WTC11 (cell line): ENCODE measurements at regions of chr1 and their contacts with region 1.

Region 1: DNA sequence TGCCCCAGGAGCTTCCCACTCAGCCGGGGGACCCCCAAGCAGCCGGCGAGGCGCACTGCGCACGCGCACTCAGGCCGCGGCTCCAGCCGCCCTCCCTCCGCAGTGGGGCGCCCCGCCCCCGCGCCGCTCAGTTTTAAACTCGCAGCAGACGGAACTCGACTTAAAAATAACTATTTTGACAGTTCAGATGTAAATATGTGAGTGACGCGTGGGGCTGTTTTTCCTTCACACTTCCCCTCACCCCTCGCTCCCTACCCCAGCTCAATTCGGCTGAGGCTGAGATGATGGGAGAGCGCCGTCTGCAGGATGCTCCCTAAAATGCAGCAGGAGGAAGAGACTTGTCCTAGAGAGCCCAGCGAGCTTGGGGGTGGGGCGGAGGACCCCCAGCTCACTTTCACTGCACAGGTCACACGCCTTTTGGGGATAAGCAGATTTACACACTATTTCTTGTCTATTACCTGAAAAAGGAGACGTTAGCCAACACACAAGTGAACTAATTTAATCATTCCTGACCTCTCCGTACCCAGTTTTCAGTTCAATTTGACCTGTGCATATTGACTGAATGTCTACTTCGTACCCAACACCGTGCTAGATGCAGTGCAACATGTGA is 8.9 kb upstream of the LEMD1 start:
- DNase-seq: peak; percentile 81
- ATAC-seq: peak; percentile 83
- H3K4me3 Mint-ChIP-seq: peak overlapping the region; percentile 83
- H3K27ac Mint-ChIP-seq: no peak overlapping the region
- H3K4me1 Mint-ChIP-seq: peaks cover 31% of the 10 kb centered on the region
- H3K27me3 Mint-ChIP-seq: peaks cover 82% of the 10 kb centered on the region
- CTCF ChIP-seq: peak; percentile 81

Region 2: DNA sequence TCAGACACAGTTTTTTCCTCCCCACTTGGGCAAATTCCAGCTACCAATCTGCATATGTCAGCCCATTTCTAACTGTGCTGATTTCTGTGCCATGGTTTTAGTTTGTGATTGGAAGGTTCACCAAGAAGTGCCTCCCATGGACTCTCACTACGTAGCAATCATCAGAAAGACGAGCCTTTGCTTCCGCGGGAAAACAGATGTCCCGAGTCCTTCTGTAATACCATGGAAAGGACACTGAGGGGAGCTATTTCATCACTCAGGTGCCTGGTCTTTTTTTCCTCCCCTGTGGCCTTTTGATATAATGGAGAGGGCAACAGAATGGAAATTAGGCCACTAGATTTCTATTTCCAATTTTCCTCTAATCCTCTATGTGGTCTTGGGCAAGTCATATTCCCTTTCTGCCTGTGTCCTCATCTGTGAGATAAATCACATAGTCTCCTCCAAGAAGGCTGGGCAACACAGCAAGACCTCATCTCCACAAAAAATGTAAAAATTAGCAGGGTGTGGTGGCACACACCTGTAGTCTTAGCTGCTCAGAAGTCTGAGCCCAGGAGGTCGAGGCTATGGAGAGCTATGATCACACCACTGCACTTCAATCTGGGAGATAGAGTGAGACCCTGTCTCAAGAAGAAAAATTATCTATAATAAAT is 33.7 kb before region 1 on chr1:
- CTCF ChIA-PET with region 1: interaction called, 38 read pairs
- POLR2A ChIA-PET with region 1: no interaction called
- DNase-seq: peak; percentile 41
- ATAC-seq: peak; percentile 93
- H3K4me3 Mint-ChIP-seq: no peak overlapping the region
- H3K27ac Mint-ChIP-seq: no peak overlapping the region
- H3K4me1 Mint-ChIP-seq: peaks cover 6% of the 10 kb centered on the region
- H3K27me3 Mint-ChIP-seq: peaks cover 13% of the 10 kb centered on the region
- CTCF ChIP-seq: peak; percentile 71

Region 3: DNA sequence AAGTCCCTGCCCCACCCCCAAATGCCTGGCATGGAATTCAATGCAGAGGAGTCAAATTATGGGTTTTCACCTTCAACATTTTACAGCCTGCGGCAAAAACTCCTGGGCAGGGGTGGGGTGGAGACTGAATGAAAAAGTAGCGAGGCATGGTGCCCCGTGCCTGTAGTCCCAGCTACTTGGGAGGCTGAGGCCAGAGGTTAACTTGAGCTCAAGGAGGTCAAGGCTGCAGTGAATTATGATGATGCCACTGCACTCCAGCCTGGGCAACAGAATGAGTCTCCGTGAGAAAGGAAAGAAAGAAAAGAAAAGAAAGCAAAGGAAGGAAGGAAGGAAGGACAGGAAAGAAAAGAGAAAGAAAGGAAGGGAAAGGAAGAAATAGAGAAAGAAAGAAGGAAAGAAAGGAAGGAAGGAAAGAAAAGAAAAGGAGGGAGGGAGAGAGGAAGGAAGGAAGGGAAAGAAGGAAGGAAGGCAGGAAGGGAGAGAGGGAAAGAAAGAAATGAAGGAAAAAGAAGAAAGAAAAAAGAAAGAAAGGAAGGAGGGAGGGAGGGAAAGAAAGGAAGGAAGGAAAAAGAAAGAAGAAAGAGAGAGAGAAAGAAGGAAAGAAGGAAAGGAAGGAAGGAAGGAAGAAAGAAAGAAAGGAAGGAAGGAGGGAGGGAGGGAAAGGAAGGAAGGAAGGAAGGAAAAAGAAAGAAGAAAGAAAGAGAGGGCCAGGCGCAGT is 20.1 kb before region 1 on chr1:
- CTCF ChIA-PET with region 1: interaction called, 69 read pairs
- POLR2A ChIA-PET with region 1: no interaction called
- DNase-seq: no peak
- ATAC-seq: no peak
- H3K4me3 Mint-ChIP-seq: no peak overlapping the region
- H3K27ac Mint-ChIP-seq: no peak overlapping the region
- H3K4me1 Mint-ChIP-seq: 0 out of 2 replicates have a peak, but pooled peaks cover 5% of the 10 kb centered on the region
- H3K27me3 Mint-ChIP-seq: peaks cover 34% of the 10 kb centered on the region
- CTCF ChIP-seq: no peak

Region 4: GRCh38 chr1:205449750-205450443 is 19.1 kb after region 1 on chr1:
- CTCF ChIA-PET with region 1: interaction called, 121 read pairs
- POLR2A ChIA-PET with region 1: interaction called, 9 read pairs
- DNase-seq: peak; percentile 74
- ATAC-seq: peak; percentile 13
- H3K4me3 Mint-ChIP-seq: peak overlapping the region; percentile 74
- H3K27ac Mint-ChIP-seq: peak overlapping the region; percentile 72
- H3K4me1 Mint-ChIP-seq: peaks cover 93% of the 10 kb centered on the region
- H3K27me3 Mint-ChIP-seq: peaks cover 13% of the 10 kb centered on the region
- CTCF ChIP-seq: no peak

Region 5: DNA sequence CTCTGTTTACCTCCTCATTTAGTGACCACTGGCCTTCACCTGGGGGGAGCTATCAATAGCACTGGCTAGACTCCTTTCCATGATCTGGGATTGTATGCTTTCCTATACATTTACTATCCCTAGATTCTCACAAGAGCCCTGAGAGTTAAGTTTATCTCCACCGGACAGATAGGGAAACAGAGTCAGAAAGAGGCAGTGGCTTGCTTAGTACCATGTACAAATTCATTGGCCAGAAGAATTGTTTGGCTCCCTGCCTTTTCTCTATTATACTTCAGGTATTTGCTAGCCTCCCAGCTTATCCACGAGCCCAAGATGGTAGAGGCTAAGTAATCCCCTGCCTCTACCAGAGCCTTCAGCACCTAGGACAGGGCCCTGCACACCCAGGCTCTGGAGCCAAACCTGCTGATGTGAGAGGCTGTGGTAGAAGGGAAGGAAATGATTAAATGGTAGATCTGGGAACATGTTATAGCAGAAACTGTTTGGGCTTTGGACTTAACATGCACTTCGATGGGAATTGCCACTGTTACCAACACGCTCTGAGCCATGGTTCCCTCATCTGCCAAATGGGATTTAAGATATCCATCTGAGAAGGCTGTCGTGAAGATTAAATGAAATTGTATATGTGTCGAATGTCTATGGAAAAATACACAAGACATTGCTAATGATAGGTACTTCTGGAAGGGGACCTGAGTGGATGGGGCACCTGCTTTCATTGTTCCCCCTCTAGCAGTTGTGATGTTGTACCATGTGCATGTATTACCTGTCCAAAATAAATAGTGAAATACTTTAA is 28.2 kb after region 1 on chr1:
- CTCF ChIA-PET with region 1: interaction called, 78 read pairs
- POLR2A ChIA-PET with region 1: interaction called, 5 read pairs
- DNase-seq: peak; percentile 79
- ATAC-seq: peak; percentile 16; the same call in 1 of the 2 replicates
- H3K4me3 Mint-ChIP-seq: no peak overlapping the region
- H3K27ac Mint-ChIP-seq: no peak overlapping the region
- H3K4me1 Mint-ChIP-seq: peaks cover 23% of the 10 kb centered on the region
- H3K27me3 Mint-ChIP-seq: peaks cover 4% of the 10 kb centered on the region
- CTCF ChIP-seq: no peak

Region 6: DNA sequence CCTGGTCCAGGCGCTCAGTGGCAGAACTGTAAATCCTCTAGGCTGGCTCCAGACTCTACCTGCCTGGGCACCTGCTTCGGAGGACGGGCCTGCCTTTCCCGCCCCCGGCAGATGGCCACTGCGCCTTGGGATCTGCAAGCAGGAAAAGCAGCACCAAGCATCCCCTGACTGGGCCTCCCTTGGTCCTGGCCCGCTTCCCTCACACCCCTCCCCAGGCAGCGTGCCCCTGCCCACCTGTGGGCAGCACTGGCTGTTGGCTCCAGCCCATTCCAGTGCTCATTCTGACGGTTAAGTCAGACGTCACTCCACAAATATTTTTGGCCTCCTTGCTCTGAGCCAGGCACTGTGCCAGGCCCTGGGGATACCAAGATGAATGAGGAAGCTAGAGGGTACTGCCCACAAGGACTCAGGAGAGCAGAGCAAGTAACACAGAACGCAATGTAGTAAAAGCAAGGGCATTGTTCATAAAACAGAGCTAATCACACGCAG is 47.0 kb after region 1 on chr1:
- CTCF ChIA-PET with region 1: interaction called, 23 read pairs
- POLR2A ChIA-PET with region 1: interaction called, 3 read pairs
- DNase-seq: no peak
- ATAC-seq: no peak; the same call in 1 of the 2 replicates
- H3K4me3 Mint-ChIP-seq: no peak overlapping the region
- H3K27ac Mint-ChIP-seq: no peak overlapping the region
- H3K4me1 Mint-ChIP-seq: peaks cover 47% of the 10 kb centered on the region
- H3K27me3 Mint-ChIP-seq: peaks cover 42% of the 10 kb centered on the region
- CTCF ChIP-seq: no peak

Region 7: DNA sequence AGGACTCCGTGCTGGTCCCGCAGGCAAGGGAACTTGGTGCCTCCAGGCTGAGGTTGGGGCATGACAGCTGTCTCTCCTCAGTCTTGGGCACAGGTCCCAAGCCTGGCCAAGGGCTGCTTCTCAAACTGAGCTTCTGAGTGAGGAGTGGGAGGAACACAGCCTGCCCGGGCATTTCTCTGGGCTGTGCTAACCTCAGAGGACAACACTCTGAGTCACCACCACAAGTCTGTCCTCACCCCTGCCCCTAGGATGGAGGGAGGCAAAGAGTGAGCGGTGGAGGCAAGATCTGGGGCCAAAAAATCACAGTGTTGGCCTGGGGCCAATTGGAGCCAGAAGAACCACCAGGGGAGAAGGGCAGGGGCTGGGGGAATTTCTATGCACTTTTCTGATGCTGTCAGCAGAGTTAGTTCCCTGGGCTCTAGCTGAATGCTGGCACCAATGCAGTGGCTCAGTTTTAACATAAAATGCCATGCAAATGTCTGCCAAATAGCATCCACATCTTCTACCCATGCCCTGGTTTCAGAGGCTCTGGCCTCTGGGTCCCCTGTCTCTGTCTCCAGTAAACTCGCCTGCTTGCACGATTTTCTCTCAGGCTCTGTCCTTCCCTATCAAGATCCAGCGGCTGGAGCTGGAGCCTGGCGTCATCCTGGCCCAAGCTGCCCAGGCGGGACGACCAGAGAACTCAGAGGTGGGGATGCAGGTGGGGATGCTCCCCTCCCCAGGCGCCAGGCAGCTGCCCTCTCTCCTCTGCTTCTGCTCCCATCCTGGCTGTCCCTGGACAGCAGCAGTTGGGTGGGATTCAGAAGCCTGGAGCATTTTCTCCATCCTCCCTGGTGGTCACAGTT is 62.7 kb after region 1 on chr1:
- CTCF ChIA-PET with region 1: interaction called, 210 read pairs
- POLR2A ChIA-PET with region 1: no interaction called
- DNase-seq: no peak
- ATAC-seq: no peak
- H3K4me3 Mint-ChIP-seq: no peak overlapping the region
- H3K27ac Mint-ChIP-seq: no peak overlapping the region
- H3K4me1 Mint-ChIP-seq: peaks cover 43% of the 10 kb centered on the region
- H3K27me3 Mint-ChIP-seq: peaks cover 24% of the 10 kb centered on the region
- CTCF ChIP-seq: no peak